Ascending aorta (tissue), 2 donors: ENCODE measurements at regions of chr17 and their contacts with region 1.

Region 1: GRCh38 chr17:82022981-82023374 is at the start of gene LRRC45:
- DNase-seq: peak; percentile 99 to 100
- H3K4me3 ChIP-seq: peak within 1 kb of the TSS; percentile 89 to 99
- H3K27ac ChIP-seq: peak within 1 kb of the TSS; percentile 56 to 71
- H3K4me1 ChIP-seq: peaks cover 12 to 20% of the 10 kb centered on the region in 2 donors
- H3K27me3 ChIP-seq: no peaks in the 10 kb centered on the region
- CTCF ChIP-seq: no peak
- total RNA-seq, gene LRRC45: 2.0 TPM

Region 2: DNA sequence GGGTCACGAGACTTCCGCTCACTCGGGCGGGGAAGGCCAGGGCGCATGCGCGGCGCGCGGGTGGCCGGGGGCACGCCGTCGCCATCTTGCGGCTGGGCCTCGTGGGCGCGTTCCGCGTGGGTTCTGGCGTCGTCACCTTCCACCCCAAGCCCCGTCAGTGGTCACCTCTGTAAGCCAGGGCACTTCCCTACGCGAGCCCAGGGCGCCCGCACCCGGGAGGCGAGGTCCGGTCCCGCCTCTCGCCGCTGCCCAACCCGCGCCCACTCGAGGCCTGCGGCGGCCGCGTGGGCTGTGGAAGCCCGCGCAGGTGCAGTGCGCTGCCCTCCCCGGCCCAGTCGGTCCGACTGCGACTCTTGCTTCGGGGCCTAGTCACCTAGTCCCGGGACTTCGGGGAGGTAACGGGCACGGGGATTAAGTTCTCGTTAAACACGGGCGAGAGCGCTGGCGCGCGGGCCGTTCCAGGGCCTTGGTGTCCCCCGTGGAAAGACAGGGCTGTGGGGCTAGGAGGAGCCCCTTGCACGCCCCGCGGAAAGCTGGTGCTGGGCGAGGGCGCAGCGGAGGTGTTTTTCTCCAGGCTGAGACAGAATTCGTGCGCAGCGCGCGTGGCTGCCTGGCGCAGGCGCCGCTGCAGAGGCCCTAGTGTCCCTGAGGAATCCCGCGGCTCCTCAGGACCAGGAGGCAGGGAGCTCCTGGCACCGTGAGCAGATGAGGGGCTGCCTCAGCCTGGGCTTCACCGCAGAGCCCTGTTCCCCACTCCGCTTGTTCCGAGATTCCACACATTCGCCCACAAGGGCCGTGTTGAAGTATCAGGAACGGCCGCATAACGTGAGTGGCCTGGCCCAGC is 151.4 kb before region 1 on chr17:
- intact Hi-C with region 1: loop called (anchors 5 kb)
- DNase-seq: peak; percentile 74 to 96
- H3K4me3 ChIP-seq: peak overlapping the region; percentile 83 to 95
- H3K27ac ChIP-seq: peak overlapping the region; percentile 96 to 99
- H3K4me1 ChIP-seq: peaks cover 18 to 32% of the 10 kb centered on the region in 2 donors
- H3K27me3 ChIP-seq: no peaks in the 10 kb centered on the region
- CTCF ChIP-seq: peak; percentile 27 to 53 (median 53)

Region 3: DNA sequence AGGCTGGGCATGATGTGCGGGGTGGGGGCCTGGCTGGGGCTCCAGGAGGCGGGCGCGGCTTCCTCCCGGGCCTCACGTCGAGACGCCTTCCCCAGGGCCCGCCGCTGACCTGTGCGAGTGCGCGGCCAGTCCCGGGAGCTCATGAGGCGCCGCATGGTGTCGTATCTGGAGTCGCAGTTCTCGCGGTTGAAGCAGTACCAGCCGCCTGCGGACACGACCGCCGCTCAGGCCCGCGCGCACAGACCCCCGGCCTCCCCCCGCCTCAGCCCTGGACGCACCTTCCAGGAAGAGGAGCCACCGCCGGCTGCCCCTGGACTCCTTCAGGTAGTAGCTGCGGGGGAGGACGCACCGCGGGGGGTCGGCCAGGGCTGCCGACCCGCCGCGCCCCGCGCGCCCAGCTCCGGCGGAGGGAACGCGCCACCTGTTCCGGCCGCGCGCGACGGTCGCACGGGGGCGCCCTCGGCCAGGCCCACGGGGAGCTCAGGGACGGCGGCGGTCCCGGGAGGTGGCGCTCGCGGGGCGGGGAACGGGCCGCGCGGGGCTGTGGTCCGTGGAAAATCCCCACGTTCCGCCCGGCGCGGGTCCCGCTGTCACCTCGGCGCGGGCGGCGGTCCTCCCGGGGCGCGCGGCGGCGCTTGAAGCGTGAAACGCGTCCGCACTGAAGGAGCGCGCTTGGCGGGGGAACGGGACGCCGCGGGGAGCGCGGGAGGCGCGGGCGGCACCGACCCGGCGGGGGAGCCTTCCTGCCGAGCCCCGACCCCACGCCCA is 63.4 kb before region 1 on chr17:
- intact Hi-C with region 1: loop called (anchors 1 kb)
- DNase-seq: peak in 1 of 2 donors; percentile 81
- H3K4me3 ChIP-seq: peak overlapping the region; percentile 50 to 64
- H3K27ac ChIP-seq: no peak overlapping the region
- H3K4me1 ChIP-seq: peaks cover 10 to 11% of the 10 kb centered on the region in 2 donors
- H3K27me3 ChIP-seq: peaks cover 29% of the 10 kb centered on the region
- CTCF ChIP-seq: peak; percentile 10 to 99 (median 47)

Region 4: GRCh38 chr17:81991684-81992305 is 31.2 kb before region 1 on chr17:
- intact Hi-C with region 1: no loop called
- DNase-seq: peak in 1 of 2 donors; percentile 81
- H3K4me3 ChIP-seq: peak overlapping the region; percentile 24 to 50
- H3K27ac ChIP-seq: peak overlapping the region; percentile 12 to 49
- H3K4me1 ChIP-seq: peaks cover 7 to 15% of the 10 kb centered on the region in 2 donors
- H3K27me3 ChIP-seq: no peaks in the 10 kb centered on the region
- CTCF ChIP-seq: no peak

Region 5: DNA sequence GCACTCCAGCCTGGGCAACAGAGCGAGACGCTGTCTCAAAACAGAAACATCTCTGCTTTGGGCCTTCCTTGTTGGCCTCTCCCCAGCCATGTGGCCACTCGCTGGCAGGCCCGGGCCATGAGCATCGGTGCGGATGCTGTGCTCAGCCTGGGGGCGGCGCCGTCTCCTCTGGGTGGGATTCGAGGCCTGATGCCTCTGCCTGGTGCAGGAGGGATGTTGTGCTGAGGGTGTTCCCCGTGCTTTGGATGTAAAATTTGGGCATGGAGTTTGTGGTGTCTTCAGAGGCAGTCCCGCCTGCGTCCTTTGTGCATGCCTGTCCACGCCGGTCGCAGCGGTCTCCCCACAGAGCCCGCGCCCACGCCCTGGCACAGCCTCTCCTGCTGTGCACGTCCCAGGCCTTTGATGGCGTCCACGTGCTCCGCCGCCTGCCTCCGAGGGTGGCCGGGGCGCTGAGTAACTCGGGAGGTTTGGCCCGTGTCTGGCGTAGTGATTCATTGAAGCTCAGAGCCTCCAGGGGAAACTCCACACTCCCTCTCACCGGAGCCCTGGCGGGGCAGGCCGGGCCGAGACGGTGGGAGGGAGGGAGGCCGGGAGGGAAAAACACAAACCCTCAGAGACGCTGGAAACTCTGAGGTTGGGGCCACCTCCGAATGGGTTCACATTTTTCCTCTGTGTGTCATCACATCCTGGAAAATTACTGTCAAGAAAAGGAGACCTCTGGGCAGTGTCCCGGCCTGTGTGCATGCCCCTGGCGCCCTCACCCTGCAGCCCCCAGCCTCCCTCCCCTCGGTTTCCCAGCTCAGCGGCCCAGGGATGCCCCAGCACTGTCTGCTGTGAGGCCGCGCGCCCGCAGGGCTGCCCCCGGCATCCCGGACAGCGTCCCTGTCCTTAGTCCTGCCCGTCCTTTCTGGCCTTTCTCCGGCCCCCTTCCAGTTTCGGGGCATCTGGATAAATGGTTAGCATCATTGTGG is 19.3 kb before region 1 on chr17:
- intact Hi-C with region 1: loop called (anchors 1 kb)
- DNase-seq: peak; percentile 75 to 97
- H3K4me3 ChIP-seq: peak overlapping the region in 1 of 2 donors; percentile 42
- H3K27ac ChIP-seq: peak overlapping the region; percentile 76 to 85
- H3K4me1 ChIP-seq: peaks cover 19 to 46% of the 10 kb centered on the region in 2 donors
- H3K27me3 ChIP-seq: no peaks in the 10 kb centered on the region
- CTCF ChIP-seq: no peak

Region 6: GRCh38 chr17:82051776-82052637 is 29.0 kb after region 1 on chr17 and contains the starts of genes GPS1 and RFNG:
- intact Hi-C with region 1: loop called (anchors 2 kb)
- DNase-seq: peak in 1 of 2 donors; percentile 80
- H3K4me3 ChIP-seq: peak within 1 kb of the TSS; percentile 83 to 94
- H3K27ac ChIP-seq: peak within 1 kb of the TSS; percentile 11 to 14
- H3K4me1 ChIP-seq: peaks cover 18 to 19% of the 10 kb centered on the region in 2 donors
- H3K27me3 ChIP-seq: no peaks in the 10 kb centered on the region
- CTCF ChIP-seq: no peak
- total RNA-seq, gene GPS1: 42.1 TPM
- total RNA-seq, gene RFNG: 73.7 TPM

Region 7: GRCh38 chr17:82212331-82213250 is 189.6 kb after region 1 on chr17 and contains the start of gene CCDC57:
- intact Hi-C with region 1: loop called (anchors 5 kb)
- DNase-seq: peak in 1 of 2 donors; percentile 89
- H3K4me3 ChIP-seq: peak within 1 kb of the TSS; percentile 55 to 99
- H3K27ac ChIP-seq: peak within 1 kb of the TSS; percentile 55 to 89
- H3K4me1 ChIP-seq: peaks cover 20 to 30% of the 10 kb centered on the region in 2 donors
- H3K27me3 ChIP-seq: no peaks in the 10 kb centered on the region
- CTCF ChIP-seq: peak in 1 of 3 experiments; percentile 10
- total RNA-seq, gene CCDC57: 12.8 TPM

Region 8: GRCh38 chr17:83144421-83145357 is 1121.7 kb after region 1 on chr17:
- intact Hi-C with region 1: no loop called
- DNase-seq: no peak
- H3K4me3 ChIP-seq: no peak overlapping the region
- H3K27ac ChIP-seq: peak overlapping the region; percentile 10 to 62
- H3K4me1 ChIP-seq: peaks cover 0 to 11% of the 10 kb centered on the region in 2 donors
- H3K27me3 ChIP-seq: no peaks in the 10 kb centered on the region
- CTCF ChIP-seq: no peak